GM10248 (cell line): ENCODE measurements at regions of chr9 and their contacts with region 1.

Region 1: GRCh38 chr9:70826562-70826961 is 294.9 kb downstream of the TRPM3 start:
- DNase-seq: no peak
- CTCF ChIP-seq: no peak

Region 2: DNA sequence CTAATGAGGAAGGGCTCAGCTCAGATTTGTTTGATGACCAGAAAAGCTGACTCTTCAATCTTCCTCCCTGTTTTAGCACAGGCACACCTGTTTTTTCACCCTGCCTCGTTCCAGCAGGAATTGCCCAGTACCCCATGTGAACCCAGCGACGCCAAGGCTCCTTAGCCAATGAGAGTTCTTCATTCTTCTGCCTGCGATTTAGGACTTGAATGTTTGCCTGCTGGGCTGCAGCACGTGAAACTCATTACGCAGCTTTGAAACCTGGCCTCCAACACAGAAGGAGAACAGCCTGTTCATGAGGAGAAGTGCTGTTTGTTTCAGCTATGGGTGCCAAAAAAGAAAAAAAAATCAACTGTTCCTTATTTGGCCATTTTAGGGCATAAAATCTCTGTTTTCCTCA is 20.6 kb before region 1 on chr9:
- CTCF ChIA-PET with region 1: interaction called, 10 read pairs
- POLR2A ChIA-PET with region 1: no interaction called
- DNase-seq: no peak
- CTCF ChIP-seq: no peak

Region 3: GRCh38 chr9:70852711-70853240 is 26.2 kb after region 1 on chr9:
- CTCF ChIA-PET with region 1: no interaction called
- POLR2A ChIA-PET with region 1: no interaction called
- DNase-seq: no peak
- CTCF ChIP-seq: no peak